Activated naive CD4-positive, alpha-beta T cell treated with anti-CD3 and anti-CD28 coated beads, Interleukin-2, amount 10 ng/mL, durations not matched to agents 7 days and 5 days (primary cell): ENCODE measurements at regions of chr5 and their contacts with region 1.

Region 1: DNA sequence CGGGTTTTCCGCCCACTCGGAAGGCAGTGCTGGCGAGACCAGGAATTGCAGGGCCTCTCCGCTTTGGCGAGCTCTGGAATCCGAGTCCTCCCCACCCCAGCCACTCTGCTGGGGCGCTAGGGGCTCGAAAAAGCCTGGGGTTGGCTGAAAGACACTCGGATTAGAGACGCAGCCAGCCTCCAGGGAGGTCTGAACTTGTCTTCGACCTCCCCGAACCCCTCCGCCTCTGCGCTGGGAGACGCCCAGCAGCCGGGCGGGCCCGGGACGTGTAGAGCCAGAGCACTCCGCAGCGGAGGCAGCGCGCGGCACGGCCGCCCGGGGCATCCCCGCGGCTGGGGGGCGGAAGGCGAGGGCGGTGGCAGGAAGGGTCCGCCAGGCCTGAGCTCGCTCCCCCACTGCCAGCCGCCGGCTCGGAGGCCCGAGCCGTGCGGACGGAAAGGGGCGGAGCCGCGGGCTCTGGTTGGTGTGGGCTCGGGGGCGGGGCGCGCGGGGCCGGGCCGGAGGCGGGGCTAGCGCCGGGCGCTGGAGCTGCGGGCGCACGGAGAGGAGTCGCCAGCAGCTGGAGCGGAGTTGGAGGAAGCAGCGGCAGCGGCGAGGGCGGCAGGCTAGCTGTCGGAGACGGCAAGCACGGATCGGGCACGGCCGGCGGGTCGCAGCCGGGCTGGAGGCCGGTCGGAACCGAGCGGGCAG is at the start of gene PIK3R1:
- DNase-seq: peak; percentile 92
- H3K4me3 Mint-ChIP-seq: peak within 1 kb of the TSS; percentile 87
- H3K27ac Mint-ChIP-seq: peak within 1 kb of the TSS; percentile 95
- H3K4me1 Mint-ChIP-seq: peaks cover 39% of the 10 kb centered on the region
- H3K27me3 Mint-ChIP-seq: no peaks in the 10 kb centered on the region

Region 2: GRCh38 chr5:67809589-67809988 is 405.8 kb before region 1 on chr5:
- CTCF ChIA-PET with region 1: no interaction called
- DNase-seq: no peak
- H3K4me3 Mint-ChIP-seq: no peak overlapping the region
- H3K27ac Mint-ChIP-seq: no peak overlapping the region
- H3K4me1 Mint-ChIP-seq: no peaks in the 10 kb centered on the region
- H3K27me3 Mint-ChIP-seq: no peaks in the 10 kb centered on the region

Region 3: GRCh38 chr5:68272289-68272688 is 56.9 kb after region 1 on chr5:
- CTCF ChIA-PET with region 1: interaction called, 11 read pairs
- DNase-seq: no peak
- H3K4me3 Mint-ChIP-seq: no peak overlapping the region
- H3K27ac Mint-ChIP-seq: peak overlapping the region; percentile 0
- H3K4me1 Mint-ChIP-seq: peaks cover 86% of the 10 kb centered on the region
- H3K27me3 Mint-ChIP-seq: no peaks in the 10 kb centered on the region